A549 (cell line): ENCODE measurements at regions of chr2 and their contacts with region 1.

Region 1: DNA sequence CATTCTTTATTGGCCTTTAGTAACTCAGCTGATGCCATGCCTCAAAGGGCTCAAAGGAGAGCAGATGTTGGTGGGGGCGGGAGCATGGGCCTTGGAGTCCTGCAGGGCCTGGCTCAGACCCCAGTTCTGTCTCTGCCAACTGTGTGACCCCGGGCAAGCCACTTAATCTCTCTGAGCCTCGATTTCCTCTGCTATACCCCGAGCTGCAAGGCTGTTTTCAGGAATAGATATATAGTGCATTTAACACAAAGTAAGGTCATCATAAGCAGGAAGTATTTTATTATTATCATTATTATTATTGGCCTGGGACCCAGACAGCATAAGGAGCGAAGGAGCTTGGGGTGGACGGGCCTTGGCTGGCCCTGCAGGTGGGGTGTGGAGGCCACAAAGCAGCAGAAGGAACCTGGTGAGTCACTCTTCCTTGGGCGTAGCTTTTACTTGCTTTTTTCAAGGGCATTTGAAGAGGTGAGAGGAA is 162.7 kb downstream of the INHBB start:
- DNase-seq: no peak
- ATAC-seq: no peak
- H3K4me3 ChIP-seq: no peak overlapping the region
- H3K27ac ChIP-seq: no peak overlapping the region
- H3K4me1 ChIP-seq: no peaks in the 10 kb centered on the region
- CTCF ChIP-seq: no peak
- EP300 ChIP-seq: no peak
- POLR2A ChIP-seq: no peak
- RAD21 ChIP-seq: no peak

Region 2: GRCh38 chr2:120520929-120521912 is 12.6 kb after region 1 on chr2:
- CTCF ChIA-PET with region 1: interaction called, 18 read pairs
- POLR2A ChIA-PET with region 1: no interaction called
- DNase-seq: peak; percentile 40 to 64
- ATAC-seq: peak; percentile 70 to 86
- H3K4me3 ChIP-seq: no peak overlapping the region
- H3K27ac ChIP-seq: no peak overlapping the region
- H3K4me1 ChIP-seq: peaks cover 4% of the 10 kb centered on the region; the same call in 2 of the 3 replicates
- CTCF ChIP-seq: peak; percentile 72
- EP300 ChIP-seq: no peak
- POLR2A ChIP-seq: no peak
- RAD21 ChIP-seq: peak; percentile 66 to 68